SK-N-SH (cell line): ENCODE measurements at regions of chr1 and their contacts with region 1.

Region 1: GRCh38 chr1:226634166-226634588 is 85.6 kb downstream of the STUM start:
- DNase-seq: peak; percentile 91
- H3K4me3 ChIP-seq: peak overlapping the region in 1 of 2 experiments; percentile 33; a peak in 1 of 4 replicates
- H3K27ac ChIP-seq: no peak overlapping the region
- H3K4me1 ChIP-seq: no peaks in the 10 kb centered on the region; a peak in 1 of 4 replicates
- H3K27me3 ChIP-seq: no peaks in the 10 kb centered on the region
- CTCF ChIP-seq: peak; percentile 97
- EP300 ChIP-seq: no peak
- RAD21 ChIP-seq: peak; percentile 94

Region 2: GRCh38 chr1:226378071-226378470 is 256.1 kb before region 1 on chr1:
- CTCF ChIA-PET with region 1: no interaction called
- POLR2A ChIA-PET with region 1: no interaction called
- DNase-seq: no peak
- H3K4me3 ChIP-seq: no peak overlapping the region
- H3K27ac ChIP-seq: no peak overlapping the region
- H3K4me1 ChIP-seq: peaks cover 0 to 4% of the 10 kb centered on the region in 2 experiments; a peak in 1 of 4 replicates
- H3K27me3 ChIP-seq: no peaks in the 10 kb centered on the region
- CTCF ChIP-seq: no peak
- EP300 ChIP-seq: no peak
- RAD21 ChIP-seq: no peak

Region 3: GRCh38 chr1:226649780-226650179 is 15.6 kb after region 1 on chr1:
- CTCF ChIA-PET with region 1: interaction called, 11 read pairs
- POLR2A ChIA-PET with region 1: no interaction called
- DNase-seq: no peak
- H3K4me3 ChIP-seq: no peak overlapping the region
- H3K27ac ChIP-seq: no peak overlapping the region
- H3K4me1 ChIP-seq: peaks cover 4 to 5% of the 10 kb centered on the region in 2 experiments; a peak in 1 of 4 replicates
- H3K27me3 ChIP-seq: no peaks in the 10 kb centered on the region
- CTCF ChIP-seq: no peak; the same call in 1 of the 2 replicates
- EP300 ChIP-seq: no peak
- RAD21 ChIP-seq: peak; percentile 28

Region 4: DNA sequence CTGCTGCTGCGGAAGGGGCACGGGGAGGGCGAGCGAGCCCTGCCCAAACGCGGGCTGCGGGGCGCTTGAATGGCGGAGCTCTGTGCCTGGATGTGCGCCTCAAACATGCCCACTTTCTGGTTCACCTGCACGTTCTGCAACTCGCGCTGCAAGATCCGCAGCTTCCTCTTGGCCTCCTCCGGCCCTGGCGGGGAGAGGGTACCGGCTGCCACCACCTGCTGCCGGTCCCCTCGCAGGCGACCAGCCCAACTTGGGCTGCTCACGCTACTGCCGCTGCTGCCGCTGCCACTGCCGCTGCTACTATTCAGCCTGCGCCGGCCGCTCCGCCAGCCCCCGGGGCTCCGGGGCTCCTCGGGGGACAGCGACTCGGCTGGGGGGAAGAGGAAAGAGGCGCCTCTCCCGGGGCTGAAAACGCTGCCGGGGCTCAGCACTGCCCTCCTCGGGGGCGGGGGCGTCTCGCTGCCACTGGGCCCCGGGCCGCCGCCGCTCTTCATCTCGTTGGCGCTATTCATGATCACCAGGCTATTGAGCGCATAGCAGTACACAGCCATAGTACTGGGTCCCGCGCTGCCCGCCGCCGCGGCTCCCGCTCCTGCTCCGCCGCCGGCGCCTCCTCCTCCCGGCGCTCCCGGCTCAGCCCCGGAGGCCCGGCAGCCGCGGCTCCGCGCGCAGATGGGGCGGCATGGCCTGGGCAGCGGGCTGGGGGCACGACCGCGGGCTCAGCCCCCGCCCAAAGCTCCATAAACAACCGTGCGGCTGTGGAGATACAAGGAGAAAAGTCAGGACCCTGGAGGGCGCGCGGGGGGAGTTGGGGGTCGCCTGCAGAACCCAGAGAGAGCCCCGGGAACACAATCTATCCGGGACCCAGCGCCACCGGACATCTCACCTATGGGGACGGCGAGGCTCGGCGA is 103.0 kb after region 1 on chr1:
- CTCF ChIA-PET with region 1: interaction called, 11 read pairs
- POLR2A ChIA-PET with region 1: no interaction called
- DNase-seq: peak; percentile 80
- H3K4me3 ChIP-seq: peak overlapping the region; percentile 65 to 80
- H3K27ac ChIP-seq: no peak overlapping the region
- H3K4me1 ChIP-seq: peaks cover 4 to 13% of the 10 kb centered on the region in 2 experiments; a peak in 3 of 4 replicates
- H3K27me3 ChIP-seq: no peaks in the 10 kb centered on the region
- CTCF ChIP-seq: no peak
- EP300 ChIP-seq: no peak
- RAD21 ChIP-seq: no peak

Region 5: DNA sequence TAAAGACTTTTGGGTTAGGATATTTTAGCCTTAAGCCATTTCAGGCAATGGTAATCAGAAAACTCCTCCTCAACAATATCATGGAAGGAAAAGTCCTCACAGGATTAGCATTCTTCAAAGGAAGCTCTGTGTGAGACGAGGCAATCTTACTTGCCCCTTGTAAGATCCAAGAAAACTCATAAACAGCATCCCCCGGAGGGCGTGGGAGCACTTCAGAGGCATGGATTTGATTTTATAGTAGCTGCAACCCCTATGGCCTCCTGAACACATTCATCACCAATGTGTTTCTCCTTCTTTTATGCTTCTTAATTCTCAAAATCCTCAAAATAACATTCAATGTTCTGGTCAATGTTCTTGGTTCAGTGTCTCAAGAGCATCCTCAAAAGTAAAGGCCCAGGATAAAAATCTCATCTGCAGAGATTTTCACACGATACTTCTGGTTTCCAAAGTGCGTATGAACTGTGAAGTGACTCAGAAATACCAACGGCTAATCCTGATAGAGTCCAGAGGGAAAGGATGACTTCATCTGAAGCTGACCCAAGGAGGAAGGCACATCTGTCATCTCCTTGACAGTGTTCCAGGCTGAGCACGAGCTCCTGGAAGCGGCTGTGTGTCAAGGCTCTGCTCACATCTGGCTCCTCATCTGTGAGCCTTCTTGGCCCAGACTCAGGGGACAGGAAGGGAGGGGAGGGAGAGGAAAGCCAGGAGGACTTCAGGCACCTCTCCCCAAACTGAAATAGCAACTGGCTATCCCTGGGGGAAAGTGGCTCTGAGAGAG is 187.0 kb after region 1 on chr1:
- CTCF ChIA-PET with region 1: interaction called, 120 read pairs
- POLR2A ChIA-PET with region 1: interaction called, 3 read pairs
- DNase-seq: peak; percentile 19
- H3K4me3 ChIP-seq: no peak overlapping the region
- H3K27ac ChIP-seq: peak overlapping the region; percentile 34 to 56; a peak in 3 of 4 replicates
- H3K4me1 ChIP-seq: peaks cover 3 to 15% of the 10 kb centered on the region in 2 experiments; a peak in 1 of 4 replicates
- H3K27me3 ChIP-seq: no peaks in the 10 kb centered on the region
- CTCF ChIP-seq: no peak
- EP300 ChIP-seq: peak in 1 of 2 experiments; percentile 73; a peak in 1 of 4 replicates
- RAD21 ChIP-seq: no peak

Region 6: DNA sequence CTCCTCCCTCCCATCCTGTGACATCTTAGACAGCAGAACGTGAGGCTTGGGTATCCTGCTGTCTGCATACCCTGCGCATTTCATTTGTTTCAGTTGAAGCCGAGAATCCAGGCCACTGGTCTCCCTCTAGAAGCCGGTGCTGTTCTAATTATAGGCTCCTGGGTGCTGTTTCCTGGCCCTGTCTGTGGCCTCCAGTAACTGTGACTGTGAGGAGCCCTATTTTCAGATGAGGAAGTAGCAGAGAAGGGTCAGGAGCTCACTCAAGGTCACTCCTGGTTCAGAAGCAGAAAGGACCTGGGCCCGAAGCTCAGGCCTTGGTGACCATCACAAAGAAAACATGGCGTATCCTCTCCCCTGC is 329.9 kb after region 1 on chr1:
- CTCF ChIA-PET with region 1: no interaction called
- POLR2A ChIA-PET with region 1: no interaction called
- DNase-seq: no peak
- H3K4me3 ChIP-seq: no peak overlapping the region
- H3K27ac ChIP-seq: no peak overlapping the region
- H3K4me1 ChIP-seq: no peaks in the 10 kb centered on the region
- H3K27me3 ChIP-seq: no peaks in the 10 kb centered on the region
- CTCF ChIP-seq: no peak
- EP300 ChIP-seq: no peak
- RAD21 ChIP-seq: no peak

Region 7: GRCh38 chr1:227440182-227440581 is 806.0 kb after region 1 on chr1:
- CTCF ChIA-PET with region 1: interaction called, 11 read pairs
- POLR2A ChIA-PET with region 1: no interaction called
- DNase-seq: no peak
- H3K4me3 ChIP-seq: no peak overlapping the region
- H3K27ac ChIP-seq: no peak overlapping the region
- H3K4me1 ChIP-seq: no peaks in the 10 kb centered on the region
- H3K27me3 ChIP-seq: no peaks in the 10 kb centered on the region
- CTCF ChIP-seq: no peak
- EP300 ChIP-seq: no peak
- RAD21 ChIP-seq: no peak